Activated T-helper 1 cell treated with anti-CD3 and anti-CD28 coated beads, Interleukin-12 subunit alpha, Interleukin-12 subunit beta, Interleukin-2, Interleukin-4 antibody, amounts not matched to agents 30 ng/mL and 10 ng/mL and 1 ng/mL, durations not matched to agents 14 hours and 24 hours and 36 hours (primary cell): ENCODE measurements at regions of chr18 and their contacts with region 1.

Region 1: DNA sequence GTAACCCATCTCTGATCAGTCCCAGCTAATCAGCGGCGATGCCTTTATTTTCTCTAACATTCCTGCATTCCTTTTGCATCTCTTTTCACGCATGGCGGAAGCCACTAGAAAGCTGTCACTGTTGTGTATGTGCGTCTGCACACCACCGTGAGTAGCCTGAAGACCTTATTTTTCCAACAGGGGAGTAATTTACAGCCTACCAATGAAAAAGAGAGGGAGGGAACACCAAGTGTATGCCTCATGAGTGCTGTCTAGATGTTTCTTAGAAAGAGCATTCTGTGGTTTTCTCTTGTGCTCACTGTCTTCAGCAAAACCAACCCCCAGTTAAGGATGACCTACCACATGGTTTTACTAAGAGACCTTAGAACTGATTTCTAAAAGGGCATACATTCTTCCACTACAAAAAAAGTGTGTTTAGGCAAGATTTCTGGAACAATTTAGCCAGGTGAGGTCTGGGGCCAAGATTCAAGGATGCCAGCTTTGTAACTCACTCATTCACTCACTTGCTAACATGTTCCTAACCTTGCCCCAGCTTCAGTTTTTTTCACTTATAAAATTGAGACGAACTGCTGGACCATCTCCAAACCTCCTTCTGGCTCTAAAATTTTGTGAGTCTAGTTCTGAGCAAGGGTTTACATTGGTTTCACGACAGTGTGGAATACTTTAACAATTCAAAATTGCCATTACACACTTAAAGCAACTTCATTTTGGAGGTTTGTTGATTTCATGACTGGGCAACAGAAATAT is 51.4 kb downstream of the BCL2 start:
- DNase-seq: no peak
- H3K4me3 Mint-ChIP-seq: peak overlapping the region; percentile 15
- H3K27ac Mint-ChIP-seq: peak overlapping the region; percentile 65
- H3K4me1 Mint-ChIP-seq: peaks cover 74% of the 10 kb centered on the region
- H3K27me3 Mint-ChIP-seq: no peaks in the 10 kb centered on the region

Region 2: GRCh38 chr18:63299837-63300745 is 31.9 kb after region 1 on chr18:
- intact Hi-C with region 1: loop called (anchors 5 kb)
- DNase-seq: no peak
- H3K4me3 Mint-ChIP-seq: peak overlapping the region; percentile 76
- H3K27ac Mint-ChIP-seq: peak overlapping the region; percentile 96
- H3K4me1 Mint-ChIP-seq: peaks cover 91% of the 10 kb centered on the region
- H3K27me3 Mint-ChIP-seq: no peaks in the 10 kb centered on the region

Region 3: DNA sequence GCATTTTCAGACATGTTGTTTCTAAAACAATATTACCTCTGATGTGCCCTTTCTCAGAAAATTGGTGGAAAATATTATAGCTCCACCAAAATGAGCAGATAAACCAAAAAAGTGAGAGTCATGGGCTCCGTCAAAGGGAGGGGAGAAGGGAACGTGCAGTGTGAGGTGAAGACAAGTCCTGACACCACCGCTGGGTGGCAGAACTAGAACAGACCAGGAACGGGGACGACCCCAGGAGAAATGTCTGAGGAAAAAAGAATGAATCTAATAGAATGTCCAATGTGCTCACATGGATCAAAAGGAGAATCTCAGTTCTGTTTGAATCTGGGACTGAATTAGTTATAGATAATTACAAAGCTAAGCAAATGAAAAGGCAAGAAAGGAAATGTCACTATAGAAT is 74.1 kb after region 1 on chr18:
- intact Hi-C with region 1: no loop called
- DNase-seq: no peak
- H3K4me3 Mint-ChIP-seq: no peak overlapping the region
- H3K27ac Mint-ChIP-seq: no peak overlapping the region
- H3K4me1 Mint-ChIP-seq: peaks cover 12% of the 10 kb centered on the region
- H3K27me3 Mint-ChIP-seq: no peaks in the 10 kb centered on the region